ENCODE measurements at regions of chr20 and their contacts with region 1.

Region 1: GRCh38 chr20:31723319-31724078 is 831 bp upstream of the BCL2L1 start:
- DNase-seq: peak; percentile 97
- H3K4me3 Mint-ChIP-seq: peak overlapping the region; percentile 95
- H3K27ac Mint-ChIP-seq: peak overlapping the region; percentile 97
- H3K4me1 Mint-ChIP-seq: peaks cover 31% of the 10 kb centered on the region
- H3K27me3 Mint-ChIP-seq: no peaks in the 10 kb centered on the region

Region 2: DNA sequence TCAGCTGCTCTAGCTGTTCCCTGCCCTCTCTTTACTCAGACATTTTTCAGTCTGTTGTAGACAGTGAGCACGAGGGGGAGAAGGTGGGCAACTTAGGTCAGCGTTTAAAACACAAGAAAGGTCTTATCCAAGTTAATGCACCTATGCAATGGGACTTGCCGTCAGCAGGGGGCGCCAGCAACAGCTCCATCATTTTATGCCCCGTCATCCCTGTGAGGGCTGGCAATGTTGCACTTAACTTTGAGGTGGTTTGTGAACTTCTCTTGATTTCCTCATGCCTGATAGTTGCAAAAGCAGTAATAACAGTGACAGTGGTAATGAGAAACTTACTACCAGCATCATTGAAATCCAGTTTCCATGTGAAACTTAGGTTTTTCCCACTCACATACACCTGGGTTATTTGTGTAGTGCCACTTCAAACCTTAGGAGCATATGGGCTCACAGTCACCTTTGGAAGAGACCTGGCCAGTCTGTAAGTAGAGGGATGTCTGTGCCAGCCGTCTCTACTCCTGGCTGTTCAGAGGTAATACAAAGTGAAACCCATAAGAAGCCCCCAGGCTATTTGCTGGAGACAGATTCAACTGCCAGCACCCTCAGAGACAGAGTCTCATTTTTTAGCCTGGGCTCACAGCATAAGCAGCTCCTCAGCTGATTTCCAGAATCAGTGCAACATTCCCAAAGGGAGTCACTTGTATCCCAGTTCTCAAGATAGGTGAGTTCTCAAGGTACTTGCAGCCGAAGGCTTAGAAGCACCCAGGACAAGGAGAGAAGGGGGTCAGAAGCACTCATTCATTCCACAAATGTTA is 163.2 kb before region 1 on chr20:
- CTCF ChIA-PET with region 1: interaction called, 16 read pairs
- POLR2A ChIA-PET with region 1: no interaction called
- DNase-seq: peak; percentile 81
- H3K4me3 Mint-ChIP-seq: no peak overlapping the region
- H3K27ac Mint-ChIP-seq: peak overlapping the region; percentile 68
- H3K4me1 Mint-ChIP-seq: peaks cover 19% of the 10 kb centered on the region
- H3K27me3 Mint-ChIP-seq: no peaks in the 10 kb centered on the region

Region 3: DNA sequence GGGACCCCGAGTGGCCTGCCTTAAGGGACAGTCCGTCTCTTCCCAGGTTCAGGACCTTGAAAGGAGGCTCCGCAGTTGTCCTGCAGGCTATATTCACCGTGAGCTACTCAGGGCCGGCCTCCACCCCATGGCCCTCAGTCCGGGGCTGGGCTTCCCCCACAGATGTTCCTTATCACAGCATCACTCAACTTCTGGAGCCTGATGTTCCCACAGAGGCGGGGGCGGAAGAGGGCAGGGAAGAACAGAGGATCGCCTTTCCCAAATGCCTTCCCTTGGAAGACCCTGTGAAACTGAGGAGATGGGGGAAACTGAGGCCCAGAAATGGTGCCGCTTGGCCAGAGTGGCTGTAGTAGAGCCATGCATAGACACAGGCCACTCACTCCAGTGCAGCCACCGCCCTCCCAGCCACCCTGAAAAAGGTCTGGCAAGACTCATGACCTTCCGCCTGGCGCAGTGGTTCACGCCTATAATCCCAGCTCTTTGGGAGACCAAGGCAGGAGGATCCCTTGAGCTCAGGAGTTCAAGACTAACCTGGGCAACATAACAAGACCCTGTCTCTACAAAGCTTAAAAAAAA is 90.1 kb before region 1 on chr20:
- CTCF ChIA-PET with region 1: interaction called, 116 read pairs
- POLR2A ChIA-PET with region 1: interaction called, 19 read pairs
- DNase-seq: no peak
- H3K4me3 Mint-ChIP-seq: no peak overlapping the region
- H3K27ac Mint-ChIP-seq: no peak overlapping the region
- H3K4me1 Mint-ChIP-seq: peaks cover 3% of the 10 kb centered on the region
- H3K27me3 Mint-ChIP-seq: no peaks in the 10 kb centered on the region

Region 4: DNA sequence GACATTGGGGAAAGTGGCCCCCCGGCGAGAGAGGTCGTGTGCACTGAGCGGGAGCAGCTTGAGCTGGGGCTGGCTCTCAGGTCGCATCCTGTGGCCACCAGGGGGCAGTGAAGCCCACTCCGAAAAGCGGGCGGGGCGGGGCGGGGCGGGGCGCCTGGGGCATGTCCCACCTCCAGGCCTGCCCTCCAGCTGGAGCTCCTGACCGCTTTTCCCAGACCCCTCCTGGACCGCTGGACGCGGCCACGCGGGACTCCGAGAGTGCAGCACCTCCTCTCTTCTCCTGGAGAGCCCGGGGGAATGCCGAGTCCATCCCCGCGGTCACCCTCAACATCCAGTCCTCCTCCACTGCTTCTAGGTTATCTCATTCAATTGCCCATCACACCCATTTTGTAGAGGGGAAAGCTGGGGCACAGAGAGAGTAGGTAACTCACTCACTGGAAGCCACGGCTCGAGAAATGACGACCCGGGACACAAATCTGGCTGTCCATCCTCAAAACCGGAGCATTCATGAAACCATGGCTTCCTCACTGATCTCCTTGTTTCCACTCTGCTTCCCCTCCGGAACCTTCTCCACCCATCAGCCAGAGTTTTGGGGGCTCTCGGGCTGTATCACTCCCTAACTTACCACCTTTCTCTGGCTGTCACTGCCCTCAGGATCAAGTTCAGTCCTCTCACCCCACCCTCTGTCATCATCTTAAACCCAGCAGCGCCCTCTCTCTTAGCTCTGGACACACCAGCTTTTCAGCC is 61.7 kb before region 1 on chr20:
- CTCF ChIA-PET with region 1: interaction called, 609 read pairs
- POLR2A ChIA-PET with region 1: interaction called, 213 read pairs
- DNase-seq: peak; percentile 81
- H3K4me3 Mint-ChIP-seq: peak overlapping the region; percentile 69
- H3K27ac Mint-ChIP-seq: peak overlapping the region; percentile 80
- H3K4me1 Mint-ChIP-seq: peaks cover 55% of the 10 kb centered on the region
- H3K27me3 Mint-ChIP-seq: no peaks in the 10 kb centered on the region

Region 5: GRCh38 chr20:31698803-31699718 is 24.4 kb before region 1 on chr20:
- CTCF ChIA-PET with region 1: interaction called, 55 read pairs
- POLR2A ChIA-PET with region 1: interaction called, 36 read pairs
- DNase-seq: peak; percentile 49
- H3K4me3 Mint-ChIP-seq: peak overlapping the region; percentile 33
- H3K27ac Mint-ChIP-seq: peak overlapping the region; percentile 83
- H3K4me1 Mint-ChIP-seq: peaks cover 68% of the 10 kb centered on the region
- H3K27me3 Mint-ChIP-seq: no peaks in the 10 kb centered on the region

Region 6: DNA sequence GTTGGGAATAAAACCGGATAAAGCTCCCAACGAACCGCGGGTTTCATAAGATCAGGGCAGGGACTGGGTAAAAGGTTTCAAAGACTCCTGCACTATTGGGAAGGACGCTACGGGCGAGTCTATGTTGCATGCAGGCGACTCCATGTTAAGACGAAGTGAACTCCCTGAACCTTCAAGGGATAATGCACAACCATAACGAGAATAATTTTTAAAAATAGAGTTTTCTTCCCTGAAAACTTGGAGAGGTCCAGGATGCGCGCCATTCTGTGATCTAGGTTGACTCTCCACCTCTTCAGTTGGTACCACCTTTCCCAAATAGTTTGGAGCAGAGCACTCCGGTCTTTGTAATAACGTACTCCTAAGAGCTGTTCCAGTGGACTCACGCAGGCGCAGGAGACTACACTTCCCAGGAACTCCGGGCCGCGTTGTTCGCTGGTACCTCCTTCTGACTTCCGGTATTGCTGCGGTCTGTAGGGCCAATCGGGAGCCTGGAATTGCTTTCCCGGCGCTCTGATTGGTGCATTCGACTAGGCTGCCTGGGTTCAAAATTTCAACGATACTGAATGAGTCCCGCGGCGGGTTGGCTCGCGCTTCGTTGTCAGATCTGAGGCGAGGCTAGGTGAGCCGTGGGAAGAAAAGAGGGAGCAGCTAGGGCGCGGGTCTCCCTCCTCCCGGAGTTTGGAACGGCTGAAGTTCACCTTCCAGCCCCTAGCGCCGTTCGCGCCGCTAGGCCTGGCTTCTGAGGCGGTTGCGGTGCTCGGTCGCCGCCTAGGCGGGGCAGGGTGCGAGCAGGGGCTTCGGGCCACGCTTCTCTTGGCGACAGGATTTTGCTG is 15.4 kb after region 1 on chr20 and contains the start of gene TPX2:
- CTCF ChIA-PET with region 1: interaction called, 46 read pairs
- POLR2A ChIA-PET with region 1: interaction called, 37 read pairs
- DNase-seq: peak; percentile 86
- H3K4me3 Mint-ChIP-seq: no peak within 1 kb of the TSS
- H3K27ac Mint-ChIP-seq: no peak within 1 kb of the TSS
- H3K4me1 Mint-ChIP-seq: peaks cover 9% of the 10 kb centered on the region
- H3K27me3 Mint-ChIP-seq: no peaks in the 10 kb centered on the region
- total RNA-seq, gene TPX2: 137 to 138 TPM

Region 7: DNA sequence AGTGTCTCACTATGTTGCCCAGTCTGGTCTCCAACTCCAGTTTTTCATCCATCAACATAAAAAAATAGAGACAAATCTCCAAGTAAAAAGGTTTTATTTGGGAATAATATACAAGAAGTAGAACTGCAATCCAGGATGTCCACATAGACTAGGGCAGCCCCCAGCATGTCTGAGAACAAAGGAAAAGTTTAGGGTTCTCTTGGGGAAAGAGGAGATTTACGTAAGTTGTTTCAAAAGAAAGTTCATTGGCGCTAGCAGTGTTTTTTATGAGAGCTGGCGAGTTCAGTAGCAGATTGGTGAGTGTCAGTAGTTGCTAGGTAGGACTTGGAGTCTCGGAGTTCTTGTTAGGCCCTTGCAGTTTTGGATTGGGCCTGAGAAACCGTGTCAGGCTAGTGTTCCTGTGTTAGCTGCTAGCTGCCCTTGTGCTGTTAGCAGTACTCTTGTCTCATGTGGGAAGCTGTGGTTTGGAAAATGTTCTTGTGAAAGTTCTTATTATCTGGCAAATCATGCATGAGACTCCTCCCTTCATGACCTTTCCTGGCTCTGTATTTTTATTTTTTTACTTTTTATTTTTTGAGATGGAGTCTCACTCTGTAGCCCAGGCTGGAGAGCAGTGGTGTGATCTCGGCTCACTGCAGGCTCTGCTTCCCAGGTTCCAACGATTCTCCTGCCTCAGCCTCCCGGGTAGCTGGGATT is 171.6 kb after region 1 on chr20:
- CTCF ChIA-PET with region 1: no interaction called
- POLR2A ChIA-PET with region 1: no interaction called
- DNase-seq: no peak
- H3K4me3 Mint-ChIP-seq: no peak overlapping the region
- H3K27ac Mint-ChIP-seq: no peak overlapping the region
- H3K4me1 Mint-ChIP-seq: no peaks in the 10 kb centered on the region
- H3K27me3 Mint-ChIP-seq: peaks cover 15% of the 10 kb centered on the region

Measured in activated CD4-positive, alpha-beta memory T cell treated with anti-CD3 and anti-CD28 coated beads, Interleukin-2, amount 10 ng/mL, durations not matched to agents 7 days and 5 days (primary cell).